ENCODE measurements at regions of chr19 and their contacts with region 1.

Region 1: DNA sequence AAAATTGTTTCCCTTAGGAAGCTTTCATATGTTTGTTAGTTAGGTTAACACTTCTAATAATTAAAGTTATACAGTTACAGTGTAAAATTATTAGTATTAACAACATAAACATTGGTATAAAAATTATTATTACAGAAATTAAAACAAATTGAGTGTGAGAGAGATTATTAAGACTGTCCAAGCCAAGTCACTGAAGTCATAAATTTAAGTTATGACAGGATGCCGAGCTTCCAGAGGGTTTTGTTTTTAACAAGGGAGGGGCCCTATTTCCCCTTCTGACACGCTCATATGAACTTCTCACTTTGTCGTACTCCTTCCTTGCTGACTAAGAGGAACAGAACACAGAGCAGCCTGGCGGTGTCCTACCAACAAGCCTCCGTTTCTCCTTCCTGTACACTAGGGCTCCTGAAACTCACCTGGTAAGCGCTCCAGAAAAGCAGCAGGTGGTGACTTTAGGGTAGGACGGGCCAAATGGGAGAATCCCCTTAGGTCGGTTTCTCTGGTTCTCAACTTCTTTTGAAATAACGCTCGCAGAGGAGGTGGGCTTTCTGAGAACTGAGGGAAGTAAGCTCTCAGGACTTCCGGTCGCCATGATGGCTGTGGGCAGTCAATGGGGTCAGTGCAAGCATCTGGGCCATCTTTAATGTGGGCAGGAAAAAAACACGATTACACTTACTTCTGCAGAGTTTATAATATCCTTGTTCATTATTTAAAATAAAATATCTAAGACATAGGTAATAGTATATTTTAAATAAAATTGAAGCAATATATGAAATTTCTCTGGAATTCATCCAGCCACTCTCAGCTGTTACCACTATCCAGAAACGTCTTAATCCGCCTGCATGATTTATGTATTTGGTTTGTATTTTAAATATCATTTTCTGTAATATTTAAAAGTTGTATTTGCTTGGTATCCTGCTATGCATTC is at the start of gene CARD8:
- DNase-seq: peak; percentile 88
- ATAC-seq: peak; percentile 96
- H3K4me3 ChIP-seq: peak within 1 kb of the TSS; percentile 72
- H3K27ac ChIP-seq: peak within 1 kb of the TSS; percentile 89
- H3K4me1 ChIP-seq: no peaks in the 10 kb centered on the region
- H3K27me3 ChIP-seq: no peaks in the 10 kb centered on the region
- CTCF ChIP-seq: 0 out of 2 replicates have a peak, but pooled peaks have one; percentile 0
- POLR2A ChIP-seq: peak; percentile 56; the same call in 1 of the 2 replicates
- RAD21 ChIP-seq: no peak; the same call in 1 of the 2 replicates
- total RNA-seq, gene CARD8: 11.3 and 12.5 TPM in 2 replicates

Region 2: DNA sequence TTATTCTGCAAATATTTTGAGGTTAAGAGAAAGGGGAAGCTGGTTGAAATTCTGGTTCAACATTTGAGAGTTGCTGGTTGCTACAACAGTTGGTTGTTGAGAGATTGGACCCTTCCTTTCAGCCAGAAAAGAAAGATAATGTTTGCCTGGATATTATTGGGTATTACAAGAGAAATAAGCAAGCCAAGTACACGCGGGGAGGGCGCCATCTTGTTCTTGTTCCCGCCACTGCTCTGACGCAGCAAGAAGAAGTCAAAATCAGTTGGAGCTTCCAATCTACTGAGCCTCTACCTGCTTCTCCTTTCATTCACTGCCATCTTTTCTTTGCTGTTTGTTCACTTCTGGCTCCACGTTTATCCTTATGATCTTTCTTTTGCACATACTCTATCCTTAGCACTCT is 282.1 kb before region 1 on chr19:
- CTCF ChIA-PET with region 1: no interaction called
- POLR2A ChIA-PET with region 1: no interaction called
- dilution Hi-C with region 1: no loop called
- in situ Hi-C with region 1: loop called (anchors 10 kb)
- intact Hi-C with region 1: no loop called
- DNase-seq: no peak
- ATAC-seq: no peak
- H3K4me3 ChIP-seq: no peak overlapping the region
- H3K27ac ChIP-seq: no peak overlapping the region
- H3K4me1 ChIP-seq: no peaks in the 10 kb centered on the region
- H3K27me3 ChIP-seq: no peaks in the 10 kb centered on the region; the same call in 1 of the 2 replicates
- CTCF ChIP-seq: no peak
- POLR2A ChIP-seq: no peak
- RAD21 ChIP-seq: no peak

Region 3: DNA sequence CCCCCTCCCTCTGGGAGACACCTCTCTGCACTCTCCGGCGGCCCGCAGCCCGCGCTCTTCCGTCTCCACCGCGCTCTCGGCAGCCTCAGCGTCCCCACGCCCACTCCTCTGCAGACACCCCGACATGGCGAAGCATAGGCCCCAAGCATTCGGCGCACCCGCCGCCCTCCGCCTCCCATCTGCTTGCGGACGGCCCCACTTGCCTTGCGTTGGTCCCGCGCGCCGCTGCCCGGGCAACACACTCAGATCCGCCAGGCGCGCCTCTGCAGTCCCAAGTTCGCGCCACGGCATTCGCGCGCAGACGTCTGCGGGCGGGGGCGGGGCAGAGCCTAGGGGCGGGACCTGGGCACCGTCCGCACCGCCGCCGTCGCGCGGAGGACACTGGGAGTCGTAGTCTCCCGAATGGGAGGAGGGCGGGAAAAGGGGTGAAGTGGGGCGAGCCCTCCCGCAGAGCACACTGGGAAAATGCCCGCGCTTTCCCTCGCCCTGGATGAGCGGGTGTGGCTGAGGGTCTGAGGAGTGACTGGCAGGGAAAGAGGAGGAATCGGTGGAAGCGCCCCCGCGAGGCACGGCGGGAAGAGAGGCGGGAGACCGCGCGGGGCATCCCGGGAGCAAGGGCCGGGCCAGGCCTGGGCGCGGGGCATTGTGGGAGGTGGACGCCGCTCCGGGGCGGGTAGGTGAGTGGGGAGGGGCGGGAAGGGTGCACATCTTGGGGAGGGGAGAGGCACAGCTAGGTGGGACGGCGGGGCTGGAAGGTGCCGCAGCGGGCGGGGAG is 85.4 kb before region 1 on chr19 and contains the starts of genes LIG1 and ZSWIM9:
- CTCF ChIA-PET with region 1: no interaction called
- POLR2A ChIA-PET with region 1: interaction called, 10 read pairs
- dilution Hi-C with region 1: no loop called
- in situ Hi-C with region 1: no loop called
- intact Hi-C with region 1: no loop called
- DNase-seq: peak; percentile 95
- ATAC-seq: peak; percentile 95
- H3K4me3 ChIP-seq: peak within 1 kb of the TSS; percentile 84
- H3K27ac ChIP-seq: peak within 1 kb of the TSS; percentile 98
- H3K4me1 ChIP-seq: peaks cover 2% of the 10 kb centered on the region
- H3K27me3 ChIP-seq: no peaks in the 10 kb centered on the region
- CTCF ChIP-seq: 0 out of 2 replicates have a peak, but pooled peaks have one; percentile 23
- POLR2A ChIP-seq: peak; percentile 18; the same call in 1 of the 2 replicates
- RAD21 ChIP-seq: no peak
- total RNA-seq, gene LIG1: 24.9 and 30.8 TPM in 2 replicates
- total RNA-seq, gene ZSWIM9: 0.54 and 0.56 TPM in 2 replicates

Region 4: DNA sequence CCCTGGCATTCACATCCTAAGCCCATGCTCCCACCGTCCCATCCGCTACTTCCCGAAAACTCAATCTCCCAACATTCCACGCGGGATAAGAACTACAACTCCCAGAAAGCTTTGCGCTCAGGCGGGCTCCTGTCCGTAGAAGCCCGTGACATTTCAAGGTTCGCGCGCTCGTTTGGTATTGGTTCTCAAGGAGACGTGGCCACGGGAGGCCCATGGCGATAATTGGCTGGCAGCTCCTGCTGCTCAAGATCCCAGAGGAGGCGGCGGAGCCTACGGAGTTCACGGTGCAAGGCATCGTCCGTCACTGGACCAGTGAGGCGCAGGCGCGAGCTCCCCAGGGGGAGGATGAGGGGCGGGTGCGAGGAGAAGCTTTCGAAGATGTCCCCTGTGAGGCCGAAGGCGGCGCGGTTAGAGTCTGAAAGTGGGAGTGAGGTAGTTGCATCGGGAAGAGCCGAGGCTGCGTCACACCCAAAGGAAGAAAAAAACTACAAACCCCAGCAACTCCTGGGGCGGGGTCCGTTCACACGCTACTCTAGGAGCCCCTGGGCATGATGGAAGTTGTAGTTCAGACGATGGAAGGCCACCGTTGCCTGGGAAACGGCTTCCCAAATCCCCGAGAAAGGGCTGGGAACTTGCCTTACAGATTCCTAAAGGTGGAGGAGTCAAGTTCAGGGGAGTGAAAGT is 465.1 kb after region 1 on chr19:
- CTCF ChIA-PET with region 1: no interaction called
- POLR2A ChIA-PET with region 1: no interaction called
- dilution Hi-C with region 1: no loop called
- in situ Hi-C with region 1: no loop called
- intact Hi-C with region 1: no loop called
- DNase-seq: peak; percentile 99
- ATAC-seq: peak; percentile 95
- H3K4me3 ChIP-seq: peak overlapping the region; percentile 67
- H3K27ac ChIP-seq: peak overlapping the region; percentile 74
- H3K4me1 ChIP-seq: peaks cover 10% of the 10 kb centered on the region
- H3K27me3 ChIP-seq: no peaks in the 10 kb centered on the region
- CTCF ChIP-seq: no peak
- POLR2A ChIP-seq: no peak
- RAD21 ChIP-seq: no peak